PC-3 (cell line): ENCODE measurements at regions of chr1 and their contacts with region 1.

Region 1: GRCh38 chr1:96416111-96416595 is 305.4 kb upstream of the PTBP2 start:
- DNase-seq: peak; percentile 84
- ATAC-seq: peak; percentile 93
- H3K4me3 ChIP-seq: no peak overlapping the region
- H3K27ac ChIP-seq: peak overlapping the region; percentile 39
- H3K4me1 ChIP-seq: peaks cover 24% of the 10 kb centered on the region
- H3K27me3 ChIP-seq: no peaks in the 10 kb centered on the region
- CTCF ChIP-seq: no peak

Region 2: DNA sequence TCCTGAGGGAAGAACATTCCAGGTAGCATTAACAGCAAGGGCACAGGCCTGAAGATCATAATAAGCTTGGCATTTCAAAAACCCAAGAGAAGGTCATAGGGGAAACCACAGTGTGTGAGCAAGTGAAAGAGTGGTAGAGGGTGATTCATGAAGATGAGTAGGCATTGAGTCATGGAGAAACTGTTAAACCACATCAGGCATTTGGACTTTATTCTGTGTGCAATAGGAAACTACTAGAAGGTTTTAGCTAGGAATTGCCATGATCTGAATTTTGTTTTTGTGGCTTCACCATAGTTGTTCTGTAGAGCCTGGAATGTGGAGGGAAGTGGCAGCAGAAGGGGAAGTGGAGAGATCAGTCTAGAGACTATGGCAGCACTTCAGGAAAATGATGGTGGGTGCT is 53.5 kb before region 1 on chr1:
- CTCF ChIA-PET with region 1: no interaction called
- POLR2A ChIA-PET with region 1: no interaction called
- intact Hi-C with region 1: loop called (anchors 1 kb)
- DNase-seq: peak; percentile 96
- ATAC-seq: peak; percentile 90
- H3K4me3 ChIP-seq: no peak overlapping the region
- H3K27ac ChIP-seq: peak overlapping the region; percentile 63
- H3K4me1 ChIP-seq: peaks cover 60% of the 10 kb centered on the region
- H3K27me3 ChIP-seq: no peaks in the 10 kb centered on the region
- CTCF ChIP-seq: no peak

Region 3: GRCh38 chr1:96400075-96400474 is 16.1 kb before region 1 on chr1:
- CTCF ChIA-PET with region 1: no interaction called
- POLR2A ChIA-PET with region 1: no interaction called
- intact Hi-C with region 1: no loop called
- DNase-seq: no peak
- ATAC-seq: no peak
- H3K4me3 ChIP-seq: no peak overlapping the region
- H3K27ac ChIP-seq: no peak overlapping the region
- H3K4me1 ChIP-seq: no peaks in the 10 kb centered on the region
- H3K27me3 ChIP-seq: no peaks in the 10 kb centered on the region
- CTCF ChIP-seq: no peak

Region 4: DNA sequence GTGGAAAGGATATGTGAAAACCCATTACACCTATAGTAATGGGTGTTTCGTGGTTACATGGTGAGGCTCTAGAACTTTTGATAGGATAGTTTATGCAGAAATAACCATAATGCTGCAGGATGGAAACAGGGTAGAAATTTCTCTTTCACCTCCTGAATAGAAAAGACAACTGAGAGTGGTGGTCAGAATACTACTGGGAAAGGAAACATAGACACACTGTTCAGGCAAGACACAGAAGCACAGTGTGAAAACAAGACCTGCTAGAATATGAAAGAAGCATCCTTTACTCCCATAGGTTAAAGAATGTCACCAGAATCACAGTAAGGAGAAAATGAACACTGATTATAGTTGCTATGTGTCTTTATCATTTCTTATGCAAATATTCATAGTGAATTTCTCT is 1008.1 kb after region 1 on chr1:
- CTCF ChIA-PET with region 1: no interaction called
- POLR2A ChIA-PET with region 1: no interaction called
- intact Hi-C with region 1: no loop called
- DNase-seq: no peak
- ATAC-seq: no peak
- H3K4me3 ChIP-seq: no peak overlapping the region
- H3K27ac ChIP-seq: no peak overlapping the region
- H3K4me1 ChIP-seq: no peaks in the 10 kb centered on the region
- H3K27me3 ChIP-seq: no peaks in the 10 kb centered on the region
- CTCF ChIP-seq: no peak